ENCODE measurements at regions of chr3 and their contacts with region 1.

Region 1: DNA sequence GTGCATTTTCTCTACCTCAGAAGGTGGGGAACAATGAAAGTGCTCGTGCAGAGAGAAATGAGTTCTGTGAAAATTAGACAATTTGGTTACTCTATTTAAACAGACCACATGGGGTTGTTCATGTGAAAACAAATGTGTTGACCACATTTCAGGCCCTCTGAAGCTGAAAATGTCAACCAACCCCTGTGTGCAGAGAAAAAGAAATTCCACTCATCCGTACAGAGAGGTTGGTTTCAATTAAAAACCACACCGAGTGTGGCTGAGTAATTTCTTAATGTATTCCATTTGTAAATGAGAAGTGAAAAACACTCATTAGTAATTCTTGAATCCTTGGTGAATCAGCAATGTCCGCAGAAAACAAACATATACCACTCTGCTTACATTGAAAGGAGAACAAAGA is 46.9 kb upstream of the SLC7A14 start:
- DNase-seq: peak; percentile 68
- H3K4me3 ChIP-seq: no peak overlapping the region
- H3K27ac ChIP-seq: peak overlapping the region; percentile 53
- H3K4me1 ChIP-seq: peaks cover 20% of the 10 kb centered on the region
- CTCF ChIP-seq: no peak

Region 2: DNA sequence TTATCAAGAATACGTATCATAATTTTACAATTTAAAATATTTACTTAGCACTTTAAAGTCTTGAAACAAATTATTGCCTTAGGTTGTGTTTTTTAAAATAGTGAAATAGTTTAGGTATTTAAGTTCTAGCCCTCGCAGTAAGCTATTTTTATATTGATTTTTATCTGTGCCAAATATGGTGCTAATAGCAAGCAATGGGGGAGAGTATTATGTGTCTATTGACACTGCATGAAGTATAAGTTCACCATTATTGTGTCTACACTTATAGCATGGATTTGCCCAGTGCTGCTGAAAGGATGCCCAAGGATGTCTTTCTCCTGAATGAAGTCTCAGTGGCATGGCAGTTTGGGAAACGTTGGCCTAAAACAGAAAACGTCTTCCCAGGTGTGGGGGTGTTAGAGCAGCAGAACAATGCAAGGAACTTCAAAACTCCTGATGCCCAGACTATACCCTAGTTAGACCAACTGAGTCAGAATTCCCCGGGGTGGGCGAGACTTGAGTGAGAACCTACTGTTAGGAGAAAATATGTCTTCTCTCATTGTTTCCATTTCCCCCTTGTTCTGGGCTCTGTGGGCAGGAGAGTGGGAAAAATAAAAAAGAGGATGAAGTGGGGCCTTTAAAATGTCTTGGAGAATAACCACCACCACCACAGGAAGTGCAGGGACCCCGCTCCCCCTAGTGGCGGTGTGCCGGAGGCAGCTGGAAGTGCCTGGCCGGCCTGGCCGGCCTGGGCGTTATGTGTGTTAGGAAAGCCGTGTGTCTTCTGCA is 57.3 kb after region 1 on chr3:
- CTCF ChIA-PET with region 1: no interaction called
- POLR2A ChIA-PET with region 1: no interaction called
- intact Hi-C with region 1: loop called (anchors 5 kb)
- DNase-seq: peak; percentile 52
- H3K4me3 ChIP-seq: no peak overlapping the region
- H3K27ac ChIP-seq: no peak overlapping the region
- H3K4me1 ChIP-seq: no peaks in the 10 kb centered on the region
- CTCF ChIP-seq: peak; percentile 82

Region 3: GRCh38 chr3:170908235-170909116 is 275.7 kb after region 1 on chr3 and contains the start of gene EIF5A2:
- CTCF ChIA-PET with region 1: no interaction called
- POLR2A ChIA-PET with region 1: no interaction called
- intact Hi-C with region 1: loop called (anchors 1 kb)
- DNase-seq: peak; percentile 98
- H3K4me3 ChIP-seq: peak within 1 kb of the TSS; percentile 76
- H3K27ac ChIP-seq: peak within 1 kb of the TSS; percentile 61
- H3K4me1 ChIP-seq: peaks cover 25% of the 10 kb centered on the region
- CTCF ChIP-seq: peak; percentile 30; the same call in 1 of the 2 replicates
- total RNA-seq, gene EIF5A2: 3.1 and 9.8 TPM in 2 replicates

Measured in OCI-LY7 (cell line).